Psoas muscle (tissue), 8 donors: ENCODE measurements at regions of chr10 and their contacts with region 1.

Region 1: DNA sequence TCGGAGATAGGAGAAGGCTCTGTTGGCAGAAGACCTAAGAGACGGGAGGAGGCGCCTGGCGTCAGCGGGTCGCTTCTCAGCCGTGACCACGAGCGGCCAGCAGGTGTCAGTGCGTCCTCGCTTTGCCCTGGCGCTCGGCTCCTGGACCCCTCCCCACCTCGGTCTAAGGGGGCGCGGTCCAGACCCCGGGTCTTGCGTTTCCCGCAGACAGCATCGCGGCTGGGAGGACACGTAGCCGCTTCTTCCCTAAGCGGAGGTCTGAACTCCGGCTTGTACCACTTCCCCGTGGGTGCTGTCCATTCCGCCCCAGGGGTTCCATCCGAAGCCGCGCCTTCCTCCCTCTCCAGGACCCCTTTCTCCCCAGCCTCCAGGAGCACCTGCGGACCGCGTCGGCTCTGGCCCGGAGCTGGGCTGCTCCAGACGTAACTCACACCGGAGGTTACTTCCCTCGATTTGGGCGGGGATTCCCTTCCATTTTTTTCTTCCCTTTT is 593 bp upstream of the ADRA2A start:
- DNase-seq: peak; percentile 49 to 74
- ATAC-seq: peak; percentile 75 to 92 (median 84)
- H3K4me3 ChIP-seq: peak overlapping the region; percentile 67
- H3K27ac ChIP-seq: no peak overlapping the region
- H3K4me1 ChIP-seq: peaks cover 16% of the 10 kb centered on the region
- H3K27me3 ChIP-seq: peaks cover 0 to 80% (median 15%) of the 10 kb centered on the region in 3 donors
- CTCF ChIP-seq: peak; percentile 89

Region 2: GRCh38 chr10:111207500-111207899 is 131.3 kb after region 1 on chr10:
- intact Hi-C with region 1: loop called in 1 of 2 experiments (anchors 5 kb)
- DNase-seq: no peak
- ATAC-seq: no peak
- H3K4me3 ChIP-seq: no peak overlapping the region
- H3K27ac ChIP-seq: no peak overlapping the region
- H3K4me1 ChIP-seq: no peaks in the 10 kb centered on the region
- H3K27me3 ChIP-seq: peaks cover 0 to 5% (median 0%) of the 10 kb centered on the region in 3 donors
- CTCF ChIP-seq: peak; percentile 20

Region 3: GRCh38 chr10:111323389-111323966 is 247.2 kb after region 1 on chr10:
- intact Hi-C with region 1: loop called in 1 of 2 experiments (anchors 1 kb)
- DNase-seq: no peak
- ATAC-seq: no peak
- H3K4me3 ChIP-seq: no peak overlapping the region
- H3K27ac ChIP-seq: no peak overlapping the region
- H3K4me1 ChIP-seq: no peaks in the 10 kb centered on the region
- H3K27me3 ChIP-seq: no peaks in the 10 kb centered on the region
- CTCF ChIP-seq: peak; percentile 13

Region 4: GRCh38 chr10:111360260-111360925 is 284.2 kb after region 1 on chr10:
- intact Hi-C with region 1: loop called (anchors 5 to 10 kb)
- DNase-seq: peak in 1 of 2 donors; percentile 13
- ATAC-seq: peak; percentile 49 to 72 (median 62)
- H3K4me3 ChIP-seq: no peak overlapping the region
- H3K27ac ChIP-seq: no peak overlapping the region
- H3K4me1 ChIP-seq: no peaks in the 10 kb centered on the region
- H3K27me3 ChIP-seq: peaks cover 0 to 3% (median 0%) of the 10 kb centered on the region in 3 donors
- CTCF ChIP-seq: peak; percentile 47

Region 5: DNA sequence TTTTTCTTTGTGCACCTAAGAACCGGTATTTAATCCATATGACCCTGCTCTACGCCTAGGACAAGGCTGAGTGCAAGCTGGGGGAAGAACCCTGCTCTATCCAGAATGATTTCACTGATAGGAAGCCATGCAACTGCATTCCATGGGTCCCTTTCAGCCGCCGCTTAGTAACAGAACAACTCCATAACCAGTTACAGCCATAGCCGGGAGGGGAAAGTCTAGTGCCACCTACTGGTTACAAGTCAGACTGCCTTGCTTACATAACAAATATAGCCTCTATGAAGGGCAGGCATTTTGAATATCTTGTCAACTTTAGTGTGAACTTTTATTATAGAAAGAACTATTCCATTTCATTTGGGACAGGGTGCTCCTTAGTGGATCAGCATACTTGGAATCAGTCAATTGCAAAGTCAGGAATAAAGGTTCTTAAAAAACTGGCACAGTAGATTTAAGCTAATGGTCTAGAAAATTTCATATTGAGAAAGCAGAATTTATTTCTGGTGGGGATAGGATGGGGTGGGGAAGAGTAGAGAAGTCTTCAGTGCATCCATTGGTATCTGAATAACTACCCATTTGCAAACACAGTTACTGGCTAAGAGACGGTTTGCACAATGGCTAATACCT is 522.3 kb after region 1 on chr10:
- intact Hi-C with region 1: loop called (anchors 5 kb)
- DNase-seq: peak in 1 of 2 donors; percentile 6
- ATAC-seq: peak in 3 of 4 donors; percentile 56 to 67 (median 65)
- H3K4me3 ChIP-seq: no peak overlapping the region
- H3K27ac ChIP-seq: no peak overlapping the region
- H3K4me1 ChIP-seq: no peaks in the 10 kb centered on the region
- H3K27me3 ChIP-seq: no peaks in the 10 kb centered on the region
- CTCF ChIP-seq: peak; percentile 66